ENCODE measurements at regions of chr16 and their contacts with region 1.

Region 1: GRCh38 chr16:67428146-67428731 is 2.7 kb upstream of the HSD11B2 start:
- DNase-seq: peak; percentile 54
- H3K4me3 ChIP-seq: no peak overlapping the region
- H3K27ac ChIP-seq: no peak overlapping the region
- H3K4me1 ChIP-seq: peaks cover 8% of the 10 kb centered on the region
- H3K27me3 ChIP-seq: peaks cover 36 to 43% of the 10 kb centered on the region in 2 experiments
- CTCF ChIP-seq: peak; percentile 82 to 94
- POLR2A ChIP-seq: no peak

Region 2: GRCh38 chr16:67260426-67261075 is 167.7 kb before region 1 on chr16:
- CTCF ChIA-PET with region 1: interaction called, 13 read pairs
- POLR2A ChIA-PET with region 1: no interaction called
- dilution Hi-C with region 1: no loop called
- intact Hi-C with region 1: no loop called
- DNase-seq: peak; percentile 24
- H3K4me3 ChIP-seq: no peak overlapping the region
- H3K27ac ChIP-seq: no peak overlapping the region
- H3K4me1 ChIP-seq: peaks cover 4% of the 10 kb centered on the region
- H3K27me3 ChIP-seq: no peaks in the 10 kb centered on the region
- CTCF ChIP-seq: peak; percentile 44 to 51
- POLR2A ChIP-seq: no peak

Region 3: DNA sequence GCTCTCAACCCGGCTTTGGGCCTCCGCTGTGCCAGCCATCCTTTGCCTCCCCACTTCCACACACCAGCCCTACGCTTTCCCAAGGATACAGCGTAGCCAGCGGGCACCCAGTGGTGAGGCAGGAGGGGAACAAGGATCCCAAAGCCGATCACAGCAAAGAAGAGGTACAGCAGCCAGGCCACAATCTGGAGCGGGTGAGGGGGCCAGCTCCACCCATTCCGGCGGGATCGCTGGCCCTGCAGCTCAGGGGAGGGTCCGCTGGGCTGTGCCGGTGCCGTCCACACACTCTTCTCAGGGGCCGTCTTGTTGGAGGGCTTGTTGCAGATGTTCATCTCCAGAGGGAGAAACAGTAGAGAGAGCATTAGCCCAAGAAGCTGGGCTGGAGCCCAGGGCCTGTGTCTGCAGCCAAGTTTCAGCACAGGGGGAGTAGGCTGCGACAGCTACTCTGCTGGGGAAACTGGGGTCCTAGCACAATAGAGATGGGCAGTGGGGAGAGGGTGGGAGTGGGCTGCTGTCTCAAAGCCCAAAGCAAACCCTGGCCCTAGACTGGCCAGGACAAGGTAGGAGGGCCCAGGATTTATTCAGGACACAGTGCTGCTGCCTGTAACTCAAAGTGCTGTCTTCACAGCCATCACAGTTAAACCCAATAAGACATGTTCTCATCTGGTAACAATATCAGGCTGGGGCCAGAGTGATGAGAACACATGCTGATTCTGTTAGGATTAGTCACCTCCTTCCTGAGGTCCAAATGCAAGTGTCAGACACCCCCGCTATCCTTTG is 21.9 kb before region 1 on chr16:
- CTCF ChIA-PET with region 1: interaction called, 15 read pairs
- POLR2A ChIA-PET with region 1: interaction called, 5 read pairs
- dilution Hi-C with region 1: no loop called
- intact Hi-C with region 1: no loop called
- DNase-seq: peak; percentile 75
- H3K4me3 ChIP-seq: no peak overlapping the region
- H3K27ac ChIP-seq: peak overlapping the region; percentile 61
- H3K4me1 ChIP-seq: peaks cover 20% of the 10 kb centered on the region
- H3K27me3 ChIP-seq: no peaks in the 10 kb centered on the region
- CTCF ChIP-seq: no peak
- POLR2A ChIP-seq: peak; percentile 14

Region 4: GRCh38 chr16:67441271-67441753 is 13.1 kb after region 1 on chr16:
- CTCF ChIA-PET with region 1: interaction called, 57 read pairs
- POLR2A ChIA-PET with region 1: interaction called, 3 read pairs
- dilution Hi-C with region 1: no loop called
- intact Hi-C with region 1: no loop called
- DNase-seq: no peak
- H3K4me3 ChIP-seq: no peak overlapping the region
- H3K27ac ChIP-seq: no peak overlapping the region
- H3K4me1 ChIP-seq: no peaks in the 10 kb centered on the region
- H3K27me3 ChIP-seq: no peaks in the 10 kb centered on the region
- CTCF ChIP-seq: no peak
- POLR2A ChIP-seq: no peak

Region 5: DNA sequence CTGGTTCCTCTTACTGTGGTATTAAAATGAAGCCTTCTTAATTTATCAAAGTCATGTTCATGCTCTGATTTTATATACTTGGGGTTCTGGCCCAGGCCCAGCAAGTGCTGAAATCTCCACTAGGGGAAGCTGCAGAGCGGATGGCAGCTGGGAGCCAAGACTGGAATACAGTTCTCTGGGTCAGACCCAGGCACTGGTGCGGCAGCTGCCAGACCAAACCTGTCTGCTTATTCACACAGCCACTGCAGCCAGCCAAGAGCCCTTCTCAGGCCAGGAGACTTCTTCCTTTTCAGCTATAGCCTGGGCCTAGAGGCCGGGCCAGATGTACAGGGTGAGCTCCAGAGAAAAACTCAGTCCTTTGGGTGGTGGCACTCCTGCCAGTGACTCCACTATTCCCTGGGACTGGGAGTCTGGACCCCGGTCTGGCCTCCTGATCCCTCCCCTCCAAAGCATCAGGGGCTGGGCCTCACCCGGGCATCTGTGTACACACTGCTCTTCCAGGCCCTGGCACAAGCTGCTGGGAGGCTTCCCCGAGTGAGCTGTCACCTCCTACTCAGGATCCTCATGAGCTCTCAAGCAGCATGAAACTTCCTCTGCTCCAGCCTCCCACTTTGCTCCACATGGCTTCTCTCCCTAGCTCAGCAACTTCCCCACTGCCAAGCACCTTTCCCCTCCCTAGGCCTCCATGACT is 28.3 kb after region 1 on chr16:
- CTCF ChIA-PET with region 1: interaction called, 201 read pairs
- POLR2A ChIA-PET with region 1: interaction called, 4 read pairs
- dilution Hi-C with region 1: no loop called
- intact Hi-C with region 1: no loop called
- DNase-seq: no peak
- H3K4me3 ChIP-seq: no peak overlapping the region
- H3K27ac ChIP-seq: no peak overlapping the region
- H3K4me1 ChIP-seq: peaks cover 13% of the 10 kb centered on the region
- H3K27me3 ChIP-seq: no peaks in the 10 kb centered on the region
- CTCF ChIP-seq: peak; percentile 17 to 34
- POLR2A ChIP-seq: no peak

Region 6: DNA sequence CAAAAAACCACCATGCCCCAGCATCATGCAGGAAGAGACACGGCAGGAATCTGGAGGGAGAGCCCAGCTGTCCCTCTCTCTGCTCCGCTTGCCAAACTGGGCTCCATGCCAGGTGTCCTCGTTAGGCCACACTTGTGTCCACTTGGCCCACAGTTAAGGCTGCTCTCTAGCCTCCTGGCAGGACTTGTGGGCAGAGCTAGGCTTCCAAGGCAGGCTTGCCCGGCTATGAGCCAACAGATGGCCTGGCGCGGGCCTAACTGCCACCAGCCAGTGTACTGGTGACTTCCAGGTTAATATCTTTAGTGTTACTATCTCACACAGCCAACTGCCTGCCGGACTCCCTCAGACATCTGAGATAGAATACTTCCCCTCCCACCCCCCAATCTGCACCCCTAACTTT is 42.1 kb after region 1 on chr16:
- CTCF ChIA-PET with region 1: interaction called, 201 read pairs
- POLR2A ChIA-PET with region 1: no interaction called
- dilution Hi-C with region 1: no loop called
- intact Hi-C with region 1: loop called (anchors 1 kb)
- DNase-seq: no peak
- H3K4me3 ChIP-seq: no peak overlapping the region
- H3K27ac ChIP-seq: no peak overlapping the region
- H3K4me1 ChIP-seq: peaks cover 4% of the 10 kb centered on the region
- H3K27me3 ChIP-seq: no peaks in the 10 kb centered on the region
- CTCF ChIP-seq: no peak
- POLR2A ChIP-seq: no peak

Region 7: DNA sequence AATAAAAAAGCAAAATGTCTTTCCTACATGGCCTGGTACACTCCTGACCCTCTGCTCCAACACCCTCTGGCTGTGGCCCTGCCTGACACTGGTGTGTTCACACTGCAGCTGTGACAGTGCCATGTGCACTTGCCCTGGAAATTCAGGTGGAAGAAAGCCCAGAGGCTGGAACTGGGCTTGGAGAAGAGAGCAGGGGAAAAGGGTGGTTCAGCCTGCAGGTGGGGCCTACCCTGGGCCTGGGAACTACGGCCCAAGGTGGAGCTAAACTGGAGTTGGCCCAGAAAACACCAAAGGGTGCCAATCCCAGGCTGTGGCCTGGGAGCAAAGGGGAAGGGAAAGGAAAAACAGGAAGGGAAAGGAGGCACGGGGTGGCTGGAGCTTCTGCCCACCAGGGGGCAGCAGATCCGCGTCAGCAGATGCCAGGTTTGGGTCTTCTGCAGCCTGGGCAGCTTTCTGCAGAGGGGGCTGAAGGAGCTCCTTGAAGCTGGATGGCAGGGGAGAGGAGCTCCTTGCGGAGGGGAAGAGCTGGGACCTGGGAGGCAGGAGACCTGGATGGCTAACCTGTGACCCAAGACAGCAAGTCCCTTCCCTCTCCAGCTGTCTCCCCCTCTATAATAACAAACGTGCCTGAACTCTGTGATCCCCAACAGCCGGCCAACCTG is 118.7 kb after region 1 on chr16:
- CTCF ChIA-PET with region 1: no interaction called
- POLR2A ChIA-PET with region 1: no interaction called
- dilution Hi-C with region 1: no loop called
- intact Hi-C with region 1: no loop called
- DNase-seq: peak; percentile 89
- H3K4me3 ChIP-seq: no peak overlapping the region
- H3K27ac ChIP-seq: peak overlapping the region; percentile 83
- H3K4me1 ChIP-seq: peaks cover 23% of the 10 kb centered on the region
- H3K27me3 ChIP-seq: no peaks in the 10 kb centered on the region
- CTCF ChIP-seq: peak; percentile 93 to 97
- POLR2A ChIP-seq: peak; percentile 50

Region 8: GRCh38 chr16:67571981-67572431 is 143.8 kb after region 1 on chr16:
- CTCF ChIA-PET with region 1: no interaction called
- POLR2A ChIA-PET with region 1: no interaction called
- dilution Hi-C with region 1: no loop called
- intact Hi-C with region 1: no loop called
- DNase-seq: peak; percentile 68
- H3K4me3 ChIP-seq: no peak overlapping the region
- H3K27ac ChIP-seq: peak overlapping the region; percentile 84
- H3K4me1 ChIP-seq: peaks cover 20% of the 10 kb centered on the region
- H3K27me3 ChIP-seq: no peaks in the 10 kb centered on the region
- CTCF ChIP-seq: no peak
- POLR2A ChIP-seq: no peak